Colonic mucosa (tissue), 4 donors: ENCODE measurements at regions of chr1 and their contacts with region 1.

Region 1: GRCh38 chr1:111399792-111400610 is 27.5 kb downstream of the OVGP1 start:
- DNase-seq: peak; percentile 62
- H3K4me3 ChIP-seq: no peak overlapping the region
- H3K27ac ChIP-seq: no peak overlapping the region
- H3K4me1 ChIP-seq: no peaks in the 10 kb centered on the region
- H3K27me3 ChIP-seq: no peaks in the 10 kb centered on the region
- CTCF ChIP-seq: peak; percentile 69

Region 2: GRCh38 chr1:111025109-111025508 is 374.9 kb before region 1 on chr1:
- intact Hi-C with region 1: loop called (anchors 10 kb)
- DNase-seq: no peak
- H3K4me3 ChIP-seq: no peak overlapping the region
- H3K27ac ChIP-seq: no peak overlapping the region
- H3K4me1 ChIP-seq: no peaks in the 10 kb centered on the region
- H3K27me3 ChIP-seq: no peaks in the 10 kb centered on the region
- CTCF ChIP-seq: no peak

Region 3: GRCh38 chr1:111222308-111223125 is 177.5 kb before region 1 on chr1:
- intact Hi-C with region 1: loop called (anchors 5 kb)
- DNase-seq: peak; percentile 83
- H3K4me3 ChIP-seq: no peak overlapping the region
- H3K27ac ChIP-seq: peak overlapping the region; percentile 29
- H3K4me1 ChIP-seq: peaks cover 4% of the 10 kb centered on the region
- H3K27me3 ChIP-seq: no peaks in the 10 kb centered on the region
- CTCF ChIP-seq: peak; percentile 65